ENCODE measurements at regions of chr19 and their contacts with region 1.

Region 1: GRCh38 chr19:19203012-19203856 is at the start of gene NR2C2AP:
- DNase-seq: peak; percentile 96 to 99
- ATAC-seq: peak; percentile 95
- H3K4me3 ChIP-seq: peak within 1 kb of the TSS; percentile 59 to 62
- H3K27ac ChIP-seq: peak within 1 kb of the TSS in 1 of 2 donors; percentile 19
- H3K4me1 ChIP-seq: no peaks in the 10 kb centered on the region
- H3K27me3 ChIP-seq: no peaks in the 10 kb centered on the region
- total RNA-seq, gene NR2C2AP: 9.8 to 11.9 TPM

Region 2: GRCh38 chr19:19081642-19082151 is 121.5 kb before region 1 on chr19:
- intact Hi-C with region 1: no loop called
- DNase-seq: no peak
- ATAC-seq: no peak
- H3K4me3 ChIP-seq: no peak overlapping the region
- H3K27ac ChIP-seq: no peak overlapping the region
- H3K4me1 ChIP-seq: no peaks in the 10 kb centered on the region
- H3K27me3 ChIP-seq: no peaks in the 10 kb centered on the region

Region 3: GRCh38 chr19:19320362-19321142 is 117.3 kb after region 1 on chr19 and contains the starts of genes MAU2 and SUGP1:
- intact Hi-C with region 1: loop called in 1 of 2 experiments (anchors 10 kb)
- DNase-seq: peak; percentile 92 to 95
- ATAC-seq: peak; percentile 96
- H3K4me3 ChIP-seq: peak within 1 kb of the TSS; percentile 89 to 91
- H3K27ac ChIP-seq: peak within 1 kb of the TSS; percentile 10 to 73
- H3K4me1 ChIP-seq: no peaks in the 10 kb centered on the region
- H3K27me3 ChIP-seq: no peaks in the 10 kb centered on the region
- total RNA-seq, gene MAU2: 54.0 to 82.8 TPM
- total RNA-seq, gene SUGP1: 29.0 to 44.3 TPM

Region 4: GRCh38 chr19:19464345-19465098 is 261.3 kb after region 1 on chr19:
- intact Hi-C with region 1: no loop called
- DNase-seq: no peak
- ATAC-seq: no peak
- H3K4me3 ChIP-seq: no peak overlapping the region
- H3K27ac ChIP-seq: peak overlapping the region in 1 of 2 donors; percentile 15
- H3K4me1 ChIP-seq: peaks cover 0 to 2% of the 10 kb centered on the region in 2 donors
- H3K27me3 ChIP-seq: no peaks in the 10 kb centered on the region